ENCODE measurements at regions of chr12 and their contacts with region 1.

Region 1: DNA sequence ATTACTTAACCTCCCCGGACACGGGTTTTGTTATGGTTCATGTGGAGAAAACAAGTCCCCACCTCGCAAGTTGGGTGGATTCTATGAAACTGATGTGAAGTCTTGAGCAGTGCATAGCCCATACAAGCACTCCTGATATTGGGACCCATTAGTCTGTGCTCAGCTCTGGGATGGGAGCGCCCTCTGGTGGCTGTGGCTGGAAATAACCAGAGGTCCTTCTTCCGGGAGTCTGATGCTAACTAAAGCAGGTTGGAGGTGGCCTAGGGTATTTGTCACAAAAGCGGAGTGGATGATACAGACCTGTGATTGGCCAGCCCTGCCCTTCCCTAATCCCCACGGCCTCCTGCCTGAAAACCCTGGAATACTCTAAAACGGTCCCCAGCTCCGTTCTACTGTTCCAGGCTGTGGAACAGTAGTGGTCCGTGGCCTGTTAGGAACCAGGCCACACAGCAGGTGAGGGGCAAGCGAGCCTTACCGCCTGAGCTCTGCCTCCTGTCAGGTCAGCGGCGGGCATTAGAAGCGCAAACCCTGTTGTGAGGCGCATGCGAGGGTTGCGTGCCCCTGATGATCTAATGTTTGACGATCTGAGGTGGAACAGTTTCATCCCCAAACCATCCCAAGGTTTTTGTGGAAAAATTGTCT is 6.4 kb downstream of the SLC48A1 start:
- DNase-seq: peak; percentile 84
- H3K4me3 Mint-ChIP-seq: no peak overlapping the region
- H3K27ac Mint-ChIP-seq: peak overlapping the region; percentile 89
- H3K4me1 Mint-ChIP-seq: peaks cover 50% of the 10 kb centered on the region
- H3K27me3 Mint-ChIP-seq: no peaks in the 10 kb centered on the region

Region 2: DNA sequence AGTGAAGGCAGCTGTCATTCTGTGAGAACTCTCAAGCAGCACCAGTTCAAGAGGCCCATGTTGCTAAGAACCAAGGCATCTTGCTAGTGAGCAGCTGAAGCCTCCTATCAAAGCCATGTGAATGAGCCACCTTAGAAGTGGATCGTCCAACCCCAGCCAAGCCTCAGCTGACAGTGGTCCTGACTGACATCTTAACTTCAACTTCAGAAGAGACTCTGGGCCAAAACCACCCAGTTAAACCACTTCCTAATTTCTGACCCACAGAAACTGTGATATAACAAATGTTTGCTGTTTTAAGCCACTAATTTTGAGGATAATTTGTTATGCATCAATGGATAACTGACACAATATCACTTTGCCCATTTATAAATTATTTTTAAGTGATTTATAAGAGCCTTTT is 329.6 kb before region 1 on chr12:
- intact Hi-C with region 1: no loop called
- DNase-seq: no peak
- H3K4me3 Mint-ChIP-seq: no peak overlapping the region
- H3K27ac Mint-ChIP-seq: no peak overlapping the region
- H3K4me1 Mint-ChIP-seq: no peaks in the 10 kb centered on the region
- H3K27me3 Mint-ChIP-seq: no peaks in the 10 kb centered on the region

Region 3: DNA sequence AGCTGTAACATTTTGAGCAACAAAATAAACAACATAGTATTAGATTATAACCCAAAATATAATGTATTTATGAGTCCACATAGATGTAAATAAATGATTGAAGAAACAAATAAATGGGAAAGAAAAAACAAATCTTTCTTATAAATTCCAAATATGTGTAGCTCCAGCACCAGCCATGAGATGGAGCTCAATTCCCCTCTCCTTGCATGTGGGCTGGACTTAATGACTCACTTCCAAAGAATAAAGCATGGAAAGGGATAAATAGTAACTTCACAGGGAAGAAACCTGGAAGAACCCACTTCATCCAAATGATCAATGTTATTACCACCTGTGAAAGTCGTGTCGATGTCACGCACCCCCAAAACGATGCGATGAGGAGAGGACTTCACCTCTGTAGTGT is 232.3 kb before region 1 on chr12:
- intact Hi-C with region 1: no loop called
- DNase-seq: no peak
- H3K4me3 Mint-ChIP-seq: no peak overlapping the region
- H3K27ac Mint-ChIP-seq: no peak overlapping the region
- H3K4me1 Mint-ChIP-seq: peaks cover 4% of the 10 kb centered on the region
- H3K27me3 Mint-ChIP-seq: no peaks in the 10 kb centered on the region

Region 4: DNA sequence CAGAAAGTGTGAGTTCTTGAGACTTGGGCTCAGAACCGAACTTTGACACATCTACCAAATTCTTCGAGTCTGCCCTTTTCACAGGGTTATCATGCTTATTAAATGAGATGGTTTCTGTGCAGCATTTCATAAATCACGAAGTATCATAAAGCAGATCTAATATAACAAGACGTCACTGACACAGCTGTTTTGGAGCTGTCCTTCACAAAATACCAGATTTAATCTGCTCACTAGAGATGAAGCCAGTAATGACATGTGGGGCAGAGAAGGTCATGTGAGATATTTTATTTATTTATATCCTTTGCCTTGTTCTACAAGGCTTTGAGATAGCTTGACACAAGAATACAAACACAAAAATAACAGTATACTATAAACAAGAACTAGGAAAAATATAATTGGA is 200.6 kb before region 1 on chr12:
- intact Hi-C with region 1: no loop called
- DNase-seq: no peak
- H3K4me3 Mint-ChIP-seq: no peak overlapping the region
- H3K27ac Mint-ChIP-seq: no peak overlapping the region
- H3K4me1 Mint-ChIP-seq: peaks cover 20% of the 10 kb centered on the region
- H3K27me3 Mint-ChIP-seq: no peaks in the 10 kb centered on the region

Region 5: GRCh38 chr12:47807338-47807737 is 27.9 kb after region 1 on chr12:
- intact Hi-C with region 1: loop called (anchors 2 kb)
- DNase-seq: no peak
- H3K4me3 Mint-ChIP-seq: peak overlapping the region; percentile 78
- H3K27ac Mint-ChIP-seq: peak overlapping the region; percentile 98
- H3K4me1 Mint-ChIP-seq: peaks cover 98% of the 10 kb centered on the region
- H3K27me3 Mint-ChIP-seq: no peaks in the 10 kb centered on the region

Region 6: DNA sequence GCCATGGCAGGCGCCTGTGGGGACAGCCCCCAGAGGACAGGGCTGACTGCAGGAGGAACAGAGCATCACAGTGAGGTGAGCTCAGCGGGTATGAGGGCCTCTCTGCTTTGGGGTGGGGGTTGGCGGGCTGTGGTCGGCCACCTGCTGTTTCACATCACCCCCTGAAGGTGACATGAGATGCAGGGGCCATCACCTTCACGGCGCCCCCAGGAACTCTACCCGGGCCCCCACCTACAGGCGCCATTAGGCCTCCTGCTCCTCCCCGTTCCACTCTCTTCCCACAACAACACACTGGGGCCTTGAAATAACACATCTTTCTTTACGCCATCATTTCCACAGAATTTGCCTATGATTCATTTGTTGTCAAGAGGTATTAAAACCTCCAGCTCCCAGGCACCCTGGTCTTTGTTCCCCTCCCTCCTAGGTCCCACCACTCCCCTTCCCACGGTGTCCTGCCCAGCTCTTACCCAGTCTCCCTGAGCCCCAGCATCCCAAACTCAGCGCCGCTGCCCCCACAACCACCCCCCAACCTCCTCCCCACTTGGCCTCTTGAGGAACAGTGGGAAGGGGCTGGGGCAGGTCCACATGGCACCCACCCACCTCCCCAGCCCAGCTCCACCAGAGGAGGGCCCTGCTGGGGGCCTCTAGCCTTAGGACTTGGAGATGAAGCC is 53.0 kb after region 1 on chr12:
- intact Hi-C with region 1: loop called (anchors 1 kb)
- DNase-seq: no peak
- H3K4me3 Mint-ChIP-seq: peak overlapping the region; percentile 75
- H3K27ac Mint-ChIP-seq: peak overlapping the region; percentile 98
- H3K4me1 Mint-ChIP-seq: peaks cover 93% of the 10 kb centered on the region
- H3K27me3 Mint-ChIP-seq: no peaks in the 10 kb centered on the region

Region 7: GRCh38 chr12:47837190-47838171 is 58.1 kb after region 1 on chr12:
- intact Hi-C with region 1: loop called (anchors 1 kb)
- DNase-seq: peak; percentile 41
- H3K4me3 Mint-ChIP-seq: no peak overlapping the region
- H3K27ac Mint-ChIP-seq: peak overlapping the region; percentile 67
- H3K4me1 Mint-ChIP-seq: peaks cover 84% of the 10 kb centered on the region
- H3K27me3 Mint-ChIP-seq: no peaks in the 10 kb centered on the region

Region 8: GRCh38 chr12:48001505-48002413 is 222.3 kb after region 1 on chr12:
- intact Hi-C with region 1: no loop called
- DNase-seq: no peak
- H3K4me3 Mint-ChIP-seq: peak overlapping the region; percentile 54
- H3K27ac Mint-ChIP-seq: peak overlapping the region; percentile 36
- H3K4me1 Mint-ChIP-seq: peaks cover 32% of the 10 kb centered on the region
- H3K27me3 Mint-ChIP-seq: peaks cover 87% of the 10 kb centered on the region

Measured in activated T-helper 1 cell treated with anti-CD3 and anti-CD28 coated beads, Interleukin-12 subunit alpha, Interleukin-12 subunit beta, Interleukin-2, Interleukin-4 antibody, amounts not matched to agents 30 ng/mL and 10 ng/mL and 1 ng/mL, durations not matched to agents 14 hours and 24 hours and 36 hours (primary cell).